HepG2 (cell line): ENCODE measurements at regions of chr17 and their contacts with region 1.

Region 1: DNA sequence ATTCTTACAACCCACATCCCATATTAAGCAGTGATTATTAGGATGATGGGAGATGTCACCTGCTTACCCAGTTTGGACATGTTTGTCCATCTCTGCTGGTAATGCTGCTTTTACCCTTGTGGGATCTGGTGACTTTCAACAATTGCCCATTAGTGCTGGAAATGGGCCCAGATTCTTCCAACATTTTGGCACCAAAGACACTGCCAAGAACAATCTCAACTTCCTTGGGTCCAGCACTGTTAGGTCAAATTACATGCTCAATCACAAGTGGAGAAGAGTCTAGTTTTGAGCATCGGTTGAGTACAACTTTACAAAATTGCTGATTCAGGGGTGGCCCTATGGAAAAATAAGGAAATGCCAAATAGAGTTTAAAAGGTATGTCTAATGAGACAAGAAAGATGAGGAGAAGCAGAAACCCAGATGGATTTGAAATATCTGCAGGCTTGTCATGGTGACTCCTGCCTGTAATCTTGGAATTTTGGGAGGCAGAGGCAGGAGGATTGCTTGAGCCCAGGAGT is 13.0 kb upstream of the ZFP3 start:
- DNase-seq: no peak
- ATAC-seq: no peak
- H3K4me3 ChIP-seq: no peak overlapping the region
- H3K27ac ChIP-seq: no peak overlapping the region
- H3K4me1 ChIP-seq: peaks cover 17% of the 10 kb centered on the region
- H3K27me3 ChIP-seq: no peaks in the 10 kb centered on the region
- CTCF ChIP-seq: no peak
- EP300 ChIP-seq: no peak
- POLR2A ChIP-seq: no peak
- RAD21 ChIP-seq: no peak

Region 2: GRCh38 chr17:4759776-4760236 is 305.5 kb before region 1 on chr17:
- CTCF ChIA-PET with region 1: no interaction called
- POLR2A ChIA-PET with region 1: no interaction called
- in situ Hi-C with region 1: no loop called
- intact Hi-C with region 1: no loop called
- DNase-seq: peak; percentile 100
- ATAC-seq: peak; percentile 98
- H3K4me3 ChIP-seq: no peak overlapping the region
- H3K27ac ChIP-seq: peak overlapping the region; percentile 95
- H3K4me1 ChIP-seq: peaks cover 66% of the 10 kb centered on the region
- H3K27me3 ChIP-seq: no peaks in the 10 kb centered on the region
- CTCF ChIP-seq: no peak
- EP300 ChIP-seq: peak; percentile 91 to 93
- POLR2A ChIP-seq: no peak
- RAD21 ChIP-seq: no peak; the same call in 1 of the 2 replicates

Region 3: GRCh38 chr17:4903051-4903818 is 162.1 kb before region 1 on chr17 and contains the start of gene CHRNE:
- CTCF ChIA-PET with region 1: no interaction called
- POLR2A ChIA-PET with region 1: no interaction called
- in situ Hi-C with region 1: no loop called
- intact Hi-C with region 1: loop called (anchors 10 kb)
- DNase-seq: peak; percentile 80
- ATAC-seq: peak; percentile 57
- H3K4me3 ChIP-seq: no peak within 1 kb of the TSS
- H3K27ac ChIP-seq: no peak within 1 kb of the TSS
- H3K4me1 ChIP-seq: peaks cover 37% of the 10 kb centered on the region
- H3K27me3 ChIP-seq: no peaks in the 10 kb centered on the region
- CTCF ChIP-seq: peak; percentile 86
- EP300 ChIP-seq: no peak
- POLR2A ChIP-seq: no peak
- RAD21 ChIP-seq: no peak
- total RNA-seq, gene CHRNE: 0.25 and 0.53 TPM in 2 replicates

Region 4: GRCh38 chr17:4980644-4981216 is 84.6 kb before region 1 on chr17:
- CTCF ChIA-PET with region 1: interaction called, 19 read pairs
- POLR2A ChIA-PET with region 1: interaction called, 3 read pairs
- in situ Hi-C with region 1: loop called (anchors 5 kb)
- intact Hi-C with region 1: no loop called
- DNase-seq: peak; percentile 54
- ATAC-seq: peak; percentile 63
- H3K4me3 ChIP-seq: no peak overlapping the region
- H3K27ac ChIP-seq: no peak overlapping the region
- H3K4me1 ChIP-seq: peaks cover 14% of the 10 kb centered on the region
- H3K27me3 ChIP-seq: no peaks in the 10 kb centered on the region
- CTCF ChIP-seq: peak; percentile 75
- EP300 ChIP-seq: no peak
- POLR2A ChIP-seq: no peak
- RAD21 ChIP-seq: no peak

Region 5: GRCh38 chr17:4986951-4987766 is 78.1 kb before region 1 on chr17 and contains the start of gene CAMTA2:
- CTCF ChIA-PET with region 1: interaction called, 3 read pairs
- POLR2A ChIA-PET with region 1: no interaction called
- in situ Hi-C with region 1: no loop called
- intact Hi-C with region 1: loop called (anchors 2 kb)
- DNase-seq: peak; percentile 72
- ATAC-seq: peak; percentile 79
- H3K4me3 ChIP-seq: peak within 1 kb of the TSS; percentile 80 to 87 (median 84)
- H3K27ac ChIP-seq: peak within 1 kb of the TSS; percentile 55
- H3K4me1 ChIP-seq: peaks cover 30% of the 10 kb centered on the region
- H3K27me3 ChIP-seq: no peaks in the 10 kb centered on the region
- CTCF ChIP-seq: peak; percentile 87
- EP300 ChIP-seq: peak in 1 of 2 experiments; percentile 34; a peak in 2 of 4 replicates
- POLR2A ChIP-seq: peak in 1 of 2 experiments; percentile 12; a peak in 2 of 4 replicates
- RAD21 ChIP-seq: peak; percentile 85
- total RNA-seq, gene CAMTA2: 4.0 and 4.1 TPM in 2 replicates

Region 6: GRCh38 chr17:5031365-5032082 is 33.8 kb before region 1 on chr17:
- CTCF ChIA-PET with region 1: interaction called, 5 read pairs
- POLR2A ChIA-PET with region 1: no interaction called
- in situ Hi-C with region 1: no loop called
- intact Hi-C with region 1: loop called (anchors 2 kb)
- DNase-seq: peak; percentile 50
- ATAC-seq: peak; percentile 28
- H3K4me3 ChIP-seq: peak overlapping the region in 2 of 3 experiments; percentile 15 to 28; a peak in 2 of 6 replicates
- H3K27ac ChIP-seq: no peak overlapping the region
- H3K4me1 ChIP-seq: peaks cover 25% of the 10 kb centered on the region
- H3K27me3 ChIP-seq: peaks cover 2 to 23% of the 10 kb centered on the region in 2 experiments; a peak in 3 of 5 replicates
- CTCF ChIP-seq: peak; percentile 73
- EP300 ChIP-seq: no peak
- POLR2A ChIP-seq: no peak
- RAD21 ChIP-seq: no peak